Activated naive CD4-positive, alpha-beta T cell treated with anti-CD3 and anti-CD28 coated beads for 36 hours (primary cell): ENCODE measurements at regions of chr4 and their contacts with region 1.

Region 1: GRCh38 chr4:39181905-39182638 is at the start of gene WDR19:
- DNase-seq: peak; percentile 99
- H3K4me3 Mint-ChIP-seq: no peak within 1 kb of the TSS
- H3K27ac Mint-ChIP-seq: no peak within 1 kb of the TSS
- H3K4me1 Mint-ChIP-seq: peaks cover 6% of the 10 kb centered on the region
- H3K27me3 Mint-ChIP-seq: no peaks in the 10 kb centered on the region
- total RNA-seq, gene WDR19: 12.9 to 18.9 TPM

Region 2: GRCh38 chr4:38902695-38903094 is 279.4 kb before region 1 on chr4:
- CTCF ChIA-PET with region 1: no interaction called
- intact Hi-C with region 1: loop called (anchors 1 kb)
- DNase-seq: no peak
- H3K4me3 Mint-ChIP-seq: no peak overlapping the region
- H3K27ac Mint-ChIP-seq: no peak overlapping the region
- H3K4me1 Mint-ChIP-seq: peaks cover 5% of the 10 kb centered on the region
- H3K27me3 Mint-ChIP-seq: peaks cover 3% of the 10 kb centered on the region

Region 3: GRCh38 chr4:39146211-39146610 is 35.9 kb before region 1 on chr4:
- CTCF ChIA-PET with region 1: no interaction called
- intact Hi-C with region 1: no loop called
- DNase-seq: no peak
- H3K4me3 Mint-ChIP-seq: no peak overlapping the region
- H3K27ac Mint-ChIP-seq: no peak overlapping the region
- H3K4me1 Mint-ChIP-seq: peaks cover 4% of the 10 kb centered on the region
- H3K27me3 Mint-ChIP-seq: no peaks in the 10 kb centered on the region

Region 4: GRCh38 chr4:39365830-39366771 is 184.0 kb after region 1 on chr4 and contains the start of gene RFC1:
- CTCF ChIA-PET with region 1: no interaction called
- intact Hi-C with region 1: loop called (anchors 1 kb)
- DNase-seq: peak; percentile 97
- H3K4me3 Mint-ChIP-seq: peak within 1 kb of the TSS; percentile 93
- H3K27ac Mint-ChIP-seq: peak within 1 kb of the TSS; percentile 91
- H3K4me1 Mint-ChIP-seq: peaks cover 32% of the 10 kb centered on the region
- H3K27me3 Mint-ChIP-seq: no peaks in the 10 kb centered on the region
- total RNA-seq, gene RFC1: 109 to 123 TPM

Region 5: GRCh38 chr4:39458505-39459300 is 276.6 kb after region 1 on chr4 and contains the starts of genes LIAS and RPL9:
- CTCF ChIA-PET with region 1: no interaction called
- intact Hi-C with region 1: loop called (anchors 1 kb)
- DNase-seq: peak; percentile 95
- H3K4me3 Mint-ChIP-seq: peak within 1 kb of the TSS; percentile 91
- H3K27ac Mint-ChIP-seq: peak within 1 kb of the TSS; percentile 98
- H3K4me1 Mint-ChIP-seq: peaks cover 48% of the 10 kb centered on the region
- H3K27me3 Mint-ChIP-seq: no peaks in the 10 kb centered on the region
- total RNA-seq, gene LIAS: 30.9 to 31.7 TPM
- total RNA-seq, gene RPL9: 2,383 to 2,428 TPM

Region 6: GRCh38 chr4:39697740-39698423 is 515.8 kb after region 1 on chr4 and contains the start of gene UBE2K:
- CTCF ChIA-PET with region 1: no interaction called
- intact Hi-C with region 1: loop called (anchors 2 kb)
- DNase-seq: peak; percentile 85
- H3K4me3 Mint-ChIP-seq: peak within 1 kb of the TSS; percentile 98
- H3K27ac Mint-ChIP-seq: peak within 1 kb of the TSS; percentile 98
- H3K4me1 Mint-ChIP-seq: peaks cover 32% of the 10 kb centered on the region
- H3K27me3 Mint-ChIP-seq: no peaks in the 10 kb centered on the region
- total RNA-seq, gene UBE2K: 60.6 to 69.5 TPM